RWPE1 (cell line): ENCODE measurements at regions of chr16 and their contacts with region 1.

Region 1: DNA sequence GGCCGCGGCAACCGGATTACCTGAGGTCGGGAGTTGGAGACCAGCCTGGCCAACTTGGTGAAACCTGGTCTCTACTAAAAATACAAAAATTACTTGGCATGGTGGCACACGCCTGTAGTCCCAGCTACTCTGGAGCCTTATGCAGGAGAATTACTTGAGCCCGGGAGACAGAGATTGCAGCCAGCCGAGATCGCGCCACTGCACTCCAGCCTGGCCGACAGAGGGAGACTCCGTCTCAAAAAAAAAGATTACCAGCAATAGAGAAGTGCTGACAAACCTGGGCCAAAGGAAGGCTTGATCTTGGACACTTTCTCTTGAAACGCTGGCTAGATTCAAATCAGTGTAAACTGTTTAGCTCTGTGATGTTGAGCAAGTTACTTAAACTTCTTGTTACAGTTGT is 4.3 kb downstream of the MT1H start:
- DNase-seq: no peak
- H3K27ac ChIP-seq: no peak overlapping the region
- CTCF ChIP-seq: no peak; the same call in 1 of the 2 replicates

Region 2: GRCh38 chr16:56701534-56701933 is 27.6 kb after region 1 on chr16:
- CTCF ChIA-PET with region 1: interaction called, 13 read pairs
- POLR2A ChIA-PET with region 1: no interaction called
- DNase-seq: no peak
- H3K27ac ChIP-seq: peak overlapping the region; percentile 75
- CTCF ChIP-seq: no peak

Region 3: GRCh38 chr16:56742030-56742984 is 68.4 kb after region 1 on chr16:
- CTCF ChIA-PET with region 1: no interaction called
- POLR2A ChIA-PET with region 1: no interaction called
- DNase-seq: peak; percentile 68
- H3K27ac ChIP-seq: no peak overlapping the region
- CTCF ChIP-seq: no peak